ENCODE measurements at regions of chr10 and their contacts with region 1.

Region 1: DNA sequence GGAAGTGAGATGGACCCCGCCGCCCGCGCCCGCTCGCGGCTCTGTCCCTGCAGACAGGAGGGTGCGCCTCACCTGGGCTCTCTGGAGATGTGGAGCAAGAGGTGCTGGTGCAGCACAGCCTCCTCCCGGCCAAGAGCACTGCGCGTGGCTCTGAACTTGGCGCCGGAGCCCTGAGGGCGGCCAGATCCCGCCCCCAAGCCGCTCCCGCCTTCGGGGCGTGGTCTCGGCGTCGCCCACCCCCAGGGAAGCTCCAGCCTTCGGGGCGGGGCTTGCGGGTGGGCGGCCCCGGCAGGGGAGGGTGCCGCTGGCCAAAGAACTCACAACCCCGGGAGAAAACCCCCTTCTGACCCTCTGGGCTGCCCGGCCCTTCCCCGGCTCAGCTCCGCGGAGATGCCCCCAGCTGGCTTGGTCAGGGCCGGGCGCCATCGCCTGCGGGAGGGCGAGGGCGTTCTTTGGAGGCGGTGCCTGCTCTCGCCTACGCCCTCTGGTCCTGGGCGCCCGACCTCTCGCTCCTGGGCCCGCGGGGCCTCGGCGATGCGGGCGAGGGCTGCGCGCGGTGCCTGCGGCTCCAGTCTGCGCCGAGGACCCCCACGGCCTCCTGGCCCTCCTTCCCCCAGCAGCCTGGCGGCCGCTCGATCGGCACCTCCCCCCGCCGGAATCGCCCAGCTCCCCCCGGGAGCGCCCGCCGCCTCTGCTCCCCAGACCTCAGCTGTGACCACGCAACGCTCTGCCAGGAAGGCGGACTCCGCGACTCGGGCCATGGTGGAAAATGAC is at the start of gene ZNF488:
- DNase-seq: peak; percentile 89 to 100 (median 99)
- ATAC-seq: peak; percentile 99
- H3K4me3 ChIP-seq: peak within 1 kb of the TSS; percentile 59
- H3K27ac ChIP-seq: no peak within 1 kb of the TSS
- H3K4me1 ChIP-seq: peaks cover 0 to 14% of the 10 kb centered on the region in 2 experiments; a peak in 3 of 5 replicates
- H3K27me3 ChIP-seq: peaks cover 13 to 33% of the 10 kb centered on the region in 2 experiments
- CTCF ChIP-seq: no peak
- EP300 ChIP-seq: no peak
- POLR2A ChIP-seq: no peak
- RAD21 ChIP-seq: no peak
- polyA plus RNA-seq, gene ZNF488: 0.03 TPM in 1 of 2 experiments, not detected in the other

Region 2: GRCh38 chr10:46284293-46285229 is 1099.8 kb before region 1 on chr10:
- CTCF ChIA-PET with region 1: no interaction called
- POLR2A ChIA-PET with region 1: interaction called, 7 read pairs
- in situ Hi-C with region 1: loop called (anchors 5 kb)
- intact Hi-C with region 1: no loop called
- DNase-seq: peak; percentile 95 to 100 (median 99)
- ATAC-seq: peak; percentile 99
- H3K4me3 ChIP-seq: peak overlapping the region; percentile 61
- H3K27ac ChIP-seq: peak overlapping the region; percentile 21; the same call in 2 of the 3 replicates
- H3K4me1 ChIP-seq: peaks cover 2 to 22% of the 10 kb centered on the region in 2 experiments; a peak in 3 of 5 replicates
- H3K27me3 ChIP-seq: peaks cover 32 to 57% of the 10 kb centered on the region in 2 experiments; a peak in 4 of 5 replicates
- CTCF ChIP-seq: peak in 1 of 3 experiments; percentile 1; a peak in 1 of 6 replicates
- EP300 ChIP-seq: 0 out of 2 replicates have a peak, but pooled peaks have one; percentile 2
- POLR2A ChIP-seq: peak; percentile 46; the same call in 1 of the 2 replicates
- RAD21 ChIP-seq: peak in 1 of 2 experiments; percentile 10; a peak in 1 of 4 replicates

Region 3: DNA sequence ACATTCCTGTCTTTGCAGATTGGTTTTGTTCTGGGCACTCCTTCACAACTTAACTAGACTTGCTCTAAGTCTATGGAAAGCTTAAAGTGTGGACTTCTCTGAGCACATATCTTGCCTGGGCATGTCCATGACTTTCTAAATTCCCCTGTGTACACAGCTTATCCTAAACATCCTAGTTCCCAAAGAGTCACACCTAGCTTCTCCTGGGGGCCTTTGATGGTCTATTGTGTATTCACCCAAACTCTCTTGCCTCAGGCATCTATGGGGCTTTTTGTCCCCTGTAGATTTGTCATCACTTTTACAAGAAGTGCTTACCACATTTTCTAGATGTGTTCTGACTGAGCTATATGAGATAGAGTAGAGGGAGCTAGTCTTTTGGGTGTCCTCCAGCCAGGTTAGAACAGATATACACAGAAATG is 12.0 kb after region 1 on chr10:
- CTCF ChIA-PET with region 1: no interaction called
- POLR2A ChIA-PET with region 1: interaction called, 3 read pairs
- in situ Hi-C with region 1: no loop called
- intact Hi-C with region 1: loop called (anchors 2 kb)
- DNase-seq: no peak
- ATAC-seq: no peak
- H3K4me3 ChIP-seq: no peak overlapping the region
- H3K27ac ChIP-seq: no peak overlapping the region
- H3K4me1 ChIP-seq: no peaks in the 10 kb centered on the region
- H3K27me3 ChIP-seq: peaks cover 9 to 19% of the 10 kb centered on the region in 2 experiments; a peak in 3 of 5 replicates
- CTCF ChIP-seq: no peak
- EP300 ChIP-seq: no peak
- POLR2A ChIP-seq: no peak
- RAD21 ChIP-seq: no peak

Region 4: GRCh38 chr10:48377751-48378535 is 993.6 kb after region 1 on chr10:
- CTCF ChIA-PET with region 1: no interaction called
- POLR2A ChIA-PET with region 1: no interaction called
- in situ Hi-C with region 1: no loop called
- intact Hi-C with region 1: no loop called
- DNase-seq: no peak
- ATAC-seq: no peak
- H3K4me3 ChIP-seq: no peak overlapping the region
- H3K27ac ChIP-seq: no peak overlapping the region
- H3K4me1 ChIP-seq: peaks cover 0 to under 1% of the 10 kb centered on the region in 2 experiments; a peak in 1 of 5 replicates
- H3K27me3 ChIP-seq: no peaks in the 10 kb centered on the region
- CTCF ChIP-seq: no peak
- EP300 ChIP-seq: no peak
- POLR2A ChIP-seq: no peak
- RAD21 ChIP-seq: no peak

Measured in K562 (cell line).